B cell (primary cell): ENCODE measurements at regions of chr4 and their contacts with region 1.

Region 1: GRCh38 chr4:86934771-86935565 is at the start of gene AFF1:
- DNase-seq: peak; percentile 95
- ATAC-seq: peak; percentile 68
- H3K4me3 ChIP-seq: peak within 1 kb of the TSS; percentile 73 to 92 (median 83)
- H3K4me3 Mint-ChIP-seq: peak within 1 kb of the TSS; percentile 91
- H3K27ac ChIP-seq: peak within 1 kb of the TSS; percentile 79 to 86
- H3K27ac Mint-ChIP-seq: peak within 1 kb of the TSS; percentile 95
- H3K4me1 ChIP-seq: peaks cover 43 to 50% of the 10 kb centered on the region in 2 donors
- H3K4me1 Mint-ChIP-seq: peaks cover 44% of the 10 kb centered on the region
- H3K27me3 ChIP-seq: no peaks in the 10 kb centered on the region
- H3K27me3 Mint-ChIP-seq: no peaks in the 10 kb centered on the region
- CTCF ChIP-seq: no peak
- total RNA-seq, gene AFF1: 135 and 145 TPM in 2 replicates

Region 2: DNA sequence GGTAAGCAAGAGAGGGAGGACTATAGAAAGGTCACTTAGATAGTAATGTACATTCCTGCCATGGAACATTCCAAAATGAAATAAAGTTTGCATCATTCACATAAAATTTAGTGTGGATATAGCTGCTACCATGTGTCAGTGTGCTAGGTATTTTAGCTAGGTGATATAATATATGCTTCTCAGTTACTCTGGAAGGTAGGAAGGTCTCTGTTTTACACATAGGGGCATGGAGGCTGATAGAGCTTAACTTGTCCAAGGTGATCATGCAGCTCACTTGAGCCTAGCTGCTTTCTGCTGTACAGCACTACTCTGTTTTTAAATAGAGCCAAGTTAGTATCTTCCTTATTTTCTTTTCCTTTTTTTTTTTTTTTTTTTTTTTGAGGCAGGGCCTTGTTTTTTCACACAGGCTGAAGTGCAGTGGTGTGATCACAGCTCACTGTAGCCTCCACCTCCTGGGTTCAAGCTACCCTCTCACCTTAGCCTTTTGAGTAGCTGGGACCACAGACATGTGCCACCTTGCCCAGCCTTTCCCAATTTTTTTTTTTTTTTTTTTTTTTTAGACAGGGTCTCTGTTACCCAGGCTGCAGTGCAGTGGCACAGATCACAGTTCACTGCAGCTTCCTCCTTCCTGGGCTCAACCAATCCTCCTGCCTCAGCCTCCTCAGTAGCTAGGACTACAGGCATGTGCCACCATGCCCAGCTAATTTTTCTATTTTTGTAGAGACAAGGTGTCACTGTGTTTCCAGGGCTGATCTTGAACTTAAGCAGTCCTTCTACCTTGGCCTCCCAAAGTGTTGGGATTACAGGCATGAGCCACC is 10.2 kb after region 1 on chr4:
- CTCF ChIA-PET with region 1: interaction called, 10 read pairs
- POLR2A ChIA-PET with region 1: no interaction called
- intact Hi-C with region 1: no loop called
- DNase-seq: no peak
- ATAC-seq: no peak
- H3K4me3 ChIP-seq: no peak overlapping the region
- H3K4me3 Mint-ChIP-seq: no peak overlapping the region
- H3K27ac ChIP-seq: no peak overlapping the region
- H3K27ac Mint-ChIP-seq: no peak overlapping the region
- H3K4me1 ChIP-seq: peaks cover 31 to 50% of the 10 kb centered on the region in 2 donors
- H3K4me1 Mint-ChIP-seq: peaks cover 50% of the 10 kb centered on the region
- H3K27me3 ChIP-seq: no peaks in the 10 kb centered on the region
- H3K27me3 Mint-ChIP-seq: no peaks in the 10 kb centered on the region
- CTCF ChIP-seq: no peak

Region 3: GRCh38 chr4:86999136-86999643 is 64.2 kb after region 1 on chr4:
- CTCF ChIA-PET with region 1: interaction called, 83 read pairs
- POLR2A ChIA-PET with region 1: interaction called, 13 read pairs
- intact Hi-C with region 1: loop called (anchors 1 kb)
- DNase-seq: no peak
- ATAC-seq: no peak
- H3K4me3 ChIP-seq: no peak overlapping the region
- H3K4me3 Mint-ChIP-seq: peak overlapping the region; percentile 57
- H3K27ac ChIP-seq: no peak overlapping the region
- H3K27ac Mint-ChIP-seq: peak overlapping the region; percentile 54
- H3K4me1 ChIP-seq: peaks cover 37 to 39% of the 10 kb centered on the region in 2 donors
- H3K4me1 Mint-ChIP-seq: peaks cover 43% of the 10 kb centered on the region
- H3K27me3 ChIP-seq: no peaks in the 10 kb centered on the region
- H3K27me3 Mint-ChIP-seq: no peaks in the 10 kb centered on the region
- CTCF ChIP-seq: no peak

Region 4: GRCh38 chr4:87073199-87074120 is 138.5 kb after region 1 on chr4:
- CTCF ChIA-PET with region 1: interaction called, 6 read pairs
- POLR2A ChIA-PET with region 1: interaction called, 3 read pairs
- intact Hi-C with region 1: loop called (anchors 1 kb)
- DNase-seq: peak; percentile 79
- ATAC-seq: peak; percentile 86
- H3K4me3 ChIP-seq: peak overlapping the region; percentile 23 to 64 (median 45)
- H3K4me3 Mint-ChIP-seq: peak overlapping the region; percentile 84
- H3K27ac ChIP-seq: peak overlapping the region; percentile 65 to 83
- H3K27ac Mint-ChIP-seq: peak overlapping the region; percentile 76
- H3K4me1 ChIP-seq: peaks cover 10 to 22% of the 10 kb centered on the region in 2 donors
- H3K4me1 Mint-ChIP-seq: peaks cover 37% of the 10 kb centered on the region
- H3K27me3 ChIP-seq: no peaks in the 10 kb centered on the region
- H3K27me3 Mint-ChIP-seq: no peaks in the 10 kb centered on the region
- CTCF ChIP-seq: no peak

Region 5: DNA sequence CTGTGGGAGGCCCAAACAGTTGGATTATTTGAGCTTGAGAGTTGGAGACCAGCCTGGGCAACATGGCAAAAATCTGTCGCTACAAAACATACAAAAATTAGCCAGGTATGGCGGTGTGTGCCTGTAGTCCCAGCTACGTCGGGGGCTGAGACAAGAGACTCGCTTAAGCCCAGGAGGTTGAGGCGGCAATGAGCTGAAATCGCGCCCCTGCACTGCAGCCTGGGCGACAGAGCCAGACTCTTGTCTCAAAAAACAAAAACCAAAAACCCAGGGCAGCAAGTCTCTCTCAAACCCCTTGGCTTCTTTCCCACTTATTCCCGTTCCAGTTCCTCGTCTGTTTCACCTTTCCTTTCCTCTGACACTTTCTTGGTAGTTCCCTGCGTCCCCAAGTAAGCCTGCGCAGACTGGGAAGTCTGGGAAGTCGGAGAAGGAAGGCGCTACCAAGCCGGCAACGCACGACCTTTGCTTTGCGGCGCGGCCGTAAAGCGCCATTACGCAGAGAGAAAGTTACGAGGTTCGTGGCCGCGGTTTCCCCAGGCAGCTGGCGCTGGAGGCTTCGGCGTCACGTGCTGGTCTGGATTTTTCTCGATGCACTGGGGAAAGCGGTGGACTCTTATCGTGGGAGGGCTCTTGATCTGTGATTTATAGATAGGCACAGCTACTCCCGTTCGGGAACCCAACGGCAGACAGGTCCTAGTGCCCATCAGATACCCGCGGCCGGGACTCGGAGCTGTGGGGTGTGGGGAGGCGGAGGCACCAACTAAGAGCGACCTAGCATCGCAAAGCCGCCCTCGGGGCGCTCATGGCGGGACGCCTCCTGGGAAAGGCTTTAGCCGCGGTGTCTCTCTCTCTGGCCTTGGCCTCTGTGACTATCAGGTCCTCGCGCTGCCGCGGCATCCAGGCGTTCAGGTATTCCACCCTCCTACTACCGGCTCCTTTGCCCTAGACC is 487.4 kb after region 1 on chr4 and contains the start of gene NUDT9:
- CTCF ChIA-PET with region 1: interaction called, 3 read pairs
- POLR2A ChIA-PET with region 1: no interaction called
- intact Hi-C with region 1: loop called (anchors 2 kb)
- DNase-seq: peak; percentile 93
- ATAC-seq: peak; percentile 85
- H3K4me3 ChIP-seq: peak within 1 kb of the TSS; percentile 86 to 97 (median 89)
- H3K4me3 Mint-ChIP-seq: peak within 1 kb of the TSS; percentile 100
- H3K27ac ChIP-seq: peak within 1 kb of the TSS; percentile 80 to 92
- H3K27ac Mint-ChIP-seq: peak within 1 kb of the TSS; percentile 100
- H3K4me1 ChIP-seq: peaks cover 16 to 26% of the 10 kb centered on the region in 2 donors
- H3K4me1 Mint-ChIP-seq: peaks cover 40% of the 10 kb centered on the region
- H3K27me3 ChIP-seq: no peaks in the 10 kb centered on the region
- H3K27me3 Mint-ChIP-seq: no peaks in the 10 kb centered on the region
- CTCF ChIP-seq: no peak
- total RNA-seq, gene NUDT9: 17.5 and 21.5 TPM in 2 replicates